ENCODE measurements at regions of chr16 and their contacts with region 1.

Region 1: DNA sequence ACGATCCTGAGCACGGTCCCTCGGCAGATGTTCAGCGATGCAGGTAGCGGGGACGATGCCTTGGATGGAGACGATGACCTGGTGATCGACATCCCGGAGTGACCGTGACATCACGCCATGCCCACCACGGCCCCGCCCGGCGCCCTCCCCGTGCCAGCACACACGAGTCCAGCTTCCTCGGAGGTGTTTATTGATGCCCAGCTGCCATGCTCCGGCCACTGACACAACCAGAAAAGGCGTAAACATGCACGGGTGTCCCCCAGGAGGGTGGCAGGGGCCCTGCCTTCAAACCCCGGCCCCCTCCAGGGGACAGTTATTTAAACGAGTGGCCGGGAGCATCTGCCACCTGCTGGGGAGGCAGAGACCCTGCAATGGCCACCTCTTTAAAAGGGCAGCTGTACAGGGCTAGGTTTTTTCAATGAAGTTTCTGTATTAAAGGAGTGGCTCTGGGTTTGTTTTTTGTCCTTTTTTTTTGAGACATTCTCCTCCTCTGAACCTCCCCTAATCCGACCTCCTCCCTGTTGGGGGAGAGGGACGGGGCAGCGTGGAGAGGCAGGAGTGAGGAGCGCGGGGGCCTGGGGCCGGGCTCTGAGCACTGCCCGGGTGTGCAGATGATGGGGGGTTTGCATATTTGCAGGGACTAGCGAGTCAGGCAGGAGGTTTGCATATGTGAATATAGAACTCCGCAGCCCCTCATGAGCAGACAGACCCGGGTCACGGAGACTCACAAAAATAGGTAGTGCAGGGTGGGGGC is 5.3 kb downstream of the DOC2A start:
- DNase-seq: no peak
- ATAC-seq: peak; percentile 52
- H3K4me3 ChIP-seq: no peak overlapping the region
- H3K27ac ChIP-seq: no peak overlapping the region
- H3K4me1 ChIP-seq: no peaks in the 10 kb centered on the region
- H3K27me3 ChIP-seq: no peaks in the 10 kb centered on the region

Region 2: GRCh38 chr16:29745853-29746345 is 259.6 kb before region 1 on chr16 and contains the start of gene C16orf54:
- intact Hi-C with region 1: loop called in 1 of 2 experiments (anchors 5 kb)
- DNase-seq: peak; percentile 86 to 89
- ATAC-seq: peak; percentile 85
- H3K4me3 ChIP-seq: no peak within 1 kb of the TSS
- H3K27ac ChIP-seq: no peak within 1 kb of the TSS
- H3K4me1 ChIP-seq: no peaks in the 10 kb centered on the region
- H3K27me3 ChIP-seq: no peaks in the 10 kb centered on the region
- total RNA-seq, gene C16orf54: 2.6 to 3.1 TPM

Region 3: DNA sequence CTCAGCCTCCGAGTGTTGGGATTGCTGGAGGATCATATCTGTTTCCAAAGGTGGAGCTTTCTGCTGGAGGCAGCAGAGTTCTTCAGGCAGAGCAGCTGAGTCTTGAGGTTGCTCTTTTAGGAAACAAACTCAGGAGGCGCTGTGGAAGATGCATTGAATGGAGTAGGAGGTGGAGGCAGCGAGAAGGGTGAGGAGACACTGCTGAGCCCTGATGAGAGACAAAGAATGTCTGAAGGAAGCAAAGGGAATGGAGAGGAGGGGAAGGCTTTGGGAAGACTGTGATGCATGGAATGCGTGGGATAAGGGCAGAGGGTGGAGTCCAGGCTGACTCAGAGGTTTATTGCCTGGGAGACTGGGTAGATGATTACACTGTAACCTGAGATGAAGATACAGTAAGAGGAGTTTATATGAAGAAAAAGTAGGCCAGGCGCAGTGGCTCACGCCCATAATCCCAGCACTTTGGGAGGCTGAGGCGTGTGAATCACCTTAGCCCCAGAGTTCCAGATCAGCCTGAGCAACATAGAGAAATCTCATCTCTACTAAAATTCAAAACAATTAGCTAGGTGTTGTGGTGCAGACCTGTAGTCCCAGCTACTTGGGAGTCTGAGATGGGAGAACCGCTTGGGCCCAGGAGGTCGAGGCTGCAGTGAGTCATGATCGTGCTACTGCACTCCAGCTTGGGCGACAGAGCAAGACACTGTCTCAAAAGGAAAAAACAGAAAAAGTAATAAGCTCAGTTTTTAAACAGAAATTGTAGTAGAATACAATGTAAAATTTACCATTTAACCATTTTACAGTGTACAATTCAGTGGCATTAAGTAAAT is 61.5 kb before region 1 on chr16:
- intact Hi-C with region 1: no loop called
- DNase-seq: peak; percentile 65 to 66
- ATAC-seq: no peak
- H3K4me3 ChIP-seq: no peak overlapping the region
- H3K27ac ChIP-seq: no peak overlapping the region
- H3K4me1 ChIP-seq: no peaks in the 10 kb centered on the region
- H3K27me3 ChIP-seq: no peaks in the 10 kb centered on the region

Measured in aorta (tissue), 5 donors.